OCI-LY7 (cell line): ENCODE measurements at regions of chr7 and their contacts with region 1.

Region 1: GRCh38 chr7:38873433-38873832 is 35.6 kb downstream of the VPS41 start:
- DNase-seq: no peak
- H3K4me3 ChIP-seq: no peak overlapping the region
- H3K27ac ChIP-seq: no peak overlapping the region
- H3K4me1 ChIP-seq: peaks cover 8% of the 10 kb centered on the region
- CTCF ChIP-seq: no peak

Region 2: DNA sequence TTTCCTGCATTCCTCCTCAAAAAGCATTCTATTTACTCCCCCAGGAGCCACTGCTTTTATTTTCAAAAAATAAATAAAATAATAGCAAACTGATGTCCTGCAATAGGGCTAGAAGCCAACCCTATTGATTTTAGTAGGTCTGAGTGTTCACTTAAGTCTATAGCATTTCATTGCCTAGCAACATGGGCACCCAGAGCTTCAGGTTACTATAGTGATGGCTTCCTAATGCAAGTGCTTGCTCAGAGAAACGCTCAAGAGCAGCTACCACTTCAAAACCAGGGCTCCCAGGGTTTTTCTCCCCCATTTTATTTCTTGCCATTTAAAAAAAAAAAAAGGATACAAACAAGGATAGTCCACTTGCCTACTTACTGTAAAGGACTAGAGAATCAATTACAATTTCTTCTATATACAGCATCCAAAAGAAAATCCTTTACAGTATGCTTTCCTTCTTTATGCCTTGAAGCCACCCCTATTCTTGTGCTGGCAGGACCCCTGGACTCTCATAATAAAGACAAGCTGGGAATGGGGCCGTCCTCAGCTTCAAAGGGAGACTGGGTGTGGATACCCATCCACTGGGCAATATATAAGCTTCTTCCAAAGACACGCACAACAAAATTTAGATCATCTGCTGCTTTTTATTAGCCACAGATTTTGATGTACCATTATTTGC is 97.8 kb before region 1 on chr7:
- CTCF ChIA-PET with region 1: no interaction called
- POLR2A ChIA-PET with region 1: no interaction called
- intact Hi-C with region 1: no loop called
- DNase-seq: no peak
- H3K4me3 ChIP-seq: no peak overlapping the region
- H3K27ac ChIP-seq: no peak overlapping the region
- H3K4me1 ChIP-seq: no peaks in the 10 kb centered on the region
- CTCF ChIP-seq: no peak

Region 3: DNA sequence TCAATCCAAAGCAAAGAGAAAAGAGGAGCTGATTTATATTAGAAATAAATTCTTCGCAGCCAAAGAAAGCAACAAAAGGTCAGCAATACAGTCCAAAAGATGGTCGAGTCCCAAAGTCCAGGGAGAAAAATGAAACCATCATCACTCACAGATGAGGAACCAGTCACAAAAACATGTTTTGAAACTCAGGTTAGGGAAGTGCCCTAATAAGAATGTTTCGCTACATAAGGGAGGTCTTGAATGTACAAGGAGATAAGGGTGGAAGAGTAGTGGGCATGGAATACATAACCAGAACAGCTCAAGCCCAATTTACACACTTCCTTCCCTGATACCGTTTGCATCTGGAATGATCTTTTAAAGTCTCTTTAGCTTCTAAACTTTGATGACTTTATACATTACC is 18.0 kb before region 1 on chr7:
- CTCF ChIA-PET with region 1: no interaction called
- POLR2A ChIA-PET with region 1: interaction called, 10 read pairs
- intact Hi-C with region 1: no loop called
- DNase-seq: no peak
- H3K4me3 ChIP-seq: no peak overlapping the region
- H3K27ac ChIP-seq: no peak overlapping the region
- H3K4me1 ChIP-seq: no peaks in the 10 kb centered on the region
- CTCF ChIP-seq: no peak